ENCODE measurements at regions of chr7 and their contacts with region 1.

Region 1: GRCh38 chr7:39623018-39623731 is at the start of gene RALA:
- DNase-seq: peak; percentile 91
- ATAC-seq: peak; percentile 94
- H3K4me3 Mint-ChIP-seq: peak within 1 kb of the TSS; percentile 94
- H3K27ac Mint-ChIP-seq: peak within 1 kb of the TSS; percentile 92
- H3K4me1 Mint-ChIP-seq: peaks cover 36% of the 10 kb centered on the region
- H3K27me3 Mint-ChIP-seq: no peaks in the 10 kb centered on the region
- total RNA-seq, gene RALA: 31.9 to 32.4 TPM

Region 2: GRCh38 chr7:39633563-39634477 is 10.6 kb after region 1 on chr7:
- POLR2A ChIA-PET with region 1: interaction called, 10 read pairs
- DNase-seq: peak; percentile 33
- ATAC-seq: peak; percentile 76
- H3K4me3 Mint-ChIP-seq: peak overlapping the region; percentile 68
- H3K27ac Mint-ChIP-seq: peak overlapping the region; percentile 86
- H3K4me1 Mint-ChIP-seq: peaks cover 48% of the 10 kb centered on the region
- H3K27me3 Mint-ChIP-seq: no peaks in the 10 kb centered on the region

Region 3: GRCh38 chr7:39688611-39689480 is 65.7 kb after region 1 on chr7:
- POLR2A ChIA-PET with region 1: no interaction called
- DNase-seq: no peak
- ATAC-seq: no peak
- H3K4me3 Mint-ChIP-seq: no peak overlapping the region
- H3K27ac Mint-ChIP-seq: no peak overlapping the region
- H3K4me1 Mint-ChIP-seq: peaks cover 2% of the 10 kb centered on the region
- H3K27me3 Mint-ChIP-seq: no peaks in the 10 kb centered on the region

Region 4: GRCh38 chr7:39709768-39710311 is 86.7 kb after region 1 on chr7:
- POLR2A ChIA-PET with region 1: no interaction called
- DNase-seq: no peak
- ATAC-seq: no peak
- H3K4me3 Mint-ChIP-seq: no peak overlapping the region
- H3K27ac Mint-ChIP-seq: no peak overlapping the region
- H3K4me1 Mint-ChIP-seq: no peaks in the 10 kb centered on the region
- H3K27me3 Mint-ChIP-seq: peaks cover 3% of the 10 kb centered on the region

Region 5: GRCh38 chr7:39732837-39733804 is 109.9 kb after region 1 on chr7:
- POLR2A ChIA-PET with region 1: interaction called, 18 read pairs
- DNase-seq: peak; percentile 90
- ATAC-seq: peak; percentile 97
- H3K4me3 Mint-ChIP-seq: peak overlapping the region; percentile 83
- H3K27ac Mint-ChIP-seq: peak overlapping the region; percentile 96
- H3K4me1 Mint-ChIP-seq: peaks cover 32% of the 10 kb centered on the region
- H3K27me3 Mint-ChIP-seq: peaks cover under 1% of the 10 kb centered on the region